ENCODE measurements at regions of chr12 and their contacts with region 1.

Region 1: DNA sequence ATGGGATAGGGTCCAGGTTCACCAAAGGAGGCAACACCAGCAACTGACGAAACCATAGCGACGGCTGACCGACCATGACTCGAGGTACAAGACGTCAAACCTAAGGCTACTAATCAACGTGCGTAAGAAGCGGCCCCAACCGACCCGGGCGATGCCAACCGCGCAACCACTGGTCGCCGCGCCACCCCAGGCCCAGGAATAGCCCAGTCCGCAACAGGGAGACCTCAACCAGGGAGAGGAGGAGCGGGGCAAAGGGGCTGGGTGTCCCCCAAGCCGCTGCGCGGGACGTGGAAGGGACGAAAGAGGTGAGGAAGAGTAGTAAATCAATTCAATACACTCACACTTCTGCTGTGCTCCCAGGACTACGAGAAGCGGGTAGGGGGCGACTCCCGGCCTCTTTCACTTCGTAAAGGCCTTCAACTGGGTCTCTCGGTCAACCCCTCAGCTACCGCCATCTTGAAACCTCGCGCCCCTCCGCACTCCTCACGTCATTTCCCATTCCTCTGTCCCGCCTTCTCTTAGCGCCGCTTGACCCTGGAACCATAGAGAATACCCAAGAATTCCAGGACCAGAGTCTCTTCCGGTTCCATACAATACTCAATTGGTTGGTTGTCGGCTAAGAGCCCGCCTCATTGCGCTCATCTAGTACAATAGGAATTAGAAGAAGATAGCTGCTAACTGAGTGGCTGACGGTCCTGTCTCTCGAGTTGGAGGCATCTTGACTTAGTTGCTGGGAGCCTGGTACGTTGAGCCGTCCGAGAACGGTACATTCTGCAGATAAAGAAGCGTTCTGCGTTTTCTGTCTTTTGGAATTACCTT is at the starts of genes C12orf60 and WBP11:
- DNase-seq: peak; percentile 94
- H3K4me3 Mint-ChIP-seq: no peak within 1 kb of the TSS
- H3K27ac Mint-ChIP-seq: no peak within 1 kb of the TSS
- H3K4me1 Mint-ChIP-seq: peaks cover 34% of the 10 kb centered on the region
- H3K27me3 Mint-ChIP-seq: no peaks in the 10 kb centered on the region
- total RNA-seq, gene C12orf60: 2.0 to 3.1 TPM
- total RNA-seq, gene WBP11: 105 to 115 TPM

Region 2: DNA sequence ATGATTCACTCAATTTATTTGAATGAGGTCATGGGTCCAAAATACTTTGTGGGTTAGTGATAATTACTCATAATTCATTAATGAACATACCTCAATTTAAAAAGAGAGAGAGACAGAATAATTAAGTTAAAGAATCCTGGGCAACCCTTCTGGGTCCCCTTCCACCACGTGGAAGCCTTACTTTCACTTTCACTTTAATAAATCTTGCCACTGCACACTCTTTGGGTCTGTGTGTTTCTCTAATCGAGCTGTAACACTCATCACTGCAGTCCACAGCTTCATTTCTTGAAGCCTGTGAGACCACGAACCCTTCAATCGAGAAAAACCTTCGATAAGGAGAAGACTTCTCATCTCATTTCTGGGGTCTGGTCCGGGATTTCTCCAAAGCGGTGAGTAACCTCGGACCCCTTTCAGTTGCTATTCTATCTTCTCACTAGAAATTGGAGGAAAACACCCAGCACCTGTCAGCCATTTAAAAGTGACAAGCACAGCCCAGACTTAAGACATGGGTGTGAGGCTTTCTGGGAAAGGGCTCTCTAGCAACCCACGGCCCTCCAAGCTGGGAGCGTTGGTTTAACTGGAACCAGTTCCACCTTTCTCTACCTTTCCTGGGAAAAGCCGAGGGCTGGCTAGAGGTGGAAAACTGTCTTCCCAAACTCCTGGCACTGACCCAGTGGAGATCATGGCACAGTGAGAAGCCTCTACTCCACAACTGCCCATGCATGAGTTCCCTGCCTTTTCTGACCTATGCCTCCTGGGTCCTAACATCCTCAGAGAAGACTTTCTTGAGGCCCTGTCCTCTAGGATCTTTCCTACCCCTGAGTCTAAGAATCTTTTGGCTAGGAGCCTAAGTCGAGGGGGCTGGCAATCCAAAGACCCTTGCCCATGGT is 586.6 kb before region 1 on chr12:
- CTCF ChIA-PET with region 1: no interaction called
- intact Hi-C with region 1: loop called (anchors 1 kb)
- DNase-seq: no peak
- H3K4me3 Mint-ChIP-seq: no peak overlapping the region
- H3K27ac Mint-ChIP-seq: peak overlapping the region; percentile 70
- H3K4me1 Mint-ChIP-seq: peaks cover 24% of the 10 kb centered on the region
- H3K27me3 Mint-ChIP-seq: no peaks in the 10 kb centered on the region

Region 3: DNA sequence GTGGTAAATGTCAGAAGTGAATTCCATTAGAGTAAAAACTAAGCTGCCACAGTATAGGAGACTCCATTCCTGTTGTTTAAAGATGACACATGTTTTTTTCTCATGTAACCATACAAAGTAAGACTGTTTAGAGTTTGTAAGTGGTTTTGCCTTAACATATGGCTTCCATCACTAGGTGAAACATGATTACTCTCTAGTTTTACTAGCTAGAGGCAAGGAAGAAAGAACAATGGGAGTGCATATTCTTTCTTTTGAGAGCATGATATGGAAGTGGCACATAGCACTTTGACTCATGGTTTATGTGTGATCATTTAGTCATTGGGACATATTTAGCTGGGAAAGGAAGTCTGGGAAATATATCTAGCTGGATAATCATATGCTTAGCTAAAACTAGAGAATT is 430.0 kb before region 1 on chr12:
- CTCF ChIA-PET with region 1: no interaction called
- intact Hi-C with region 1: no loop called
- DNase-seq: no peak
- H3K4me3 Mint-ChIP-seq: peak overlapping the region; percentile 41
- H3K27ac Mint-ChIP-seq: peak overlapping the region; percentile 89
- H3K4me1 Mint-ChIP-seq: peaks cover 59% of the 10 kb centered on the region
- H3K27me3 Mint-ChIP-seq: no peaks in the 10 kb centered on the region

Region 4: GRCh38 chr12:14443531-14443930 is 359.7 kb before region 1 on chr12:
- CTCF ChIA-PET with region 1: no interaction called
- intact Hi-C with region 1: no loop called
- DNase-seq: no peak
- H3K4me3 Mint-ChIP-seq: no peak overlapping the region
- H3K27ac Mint-ChIP-seq: no peak overlapping the region
- H3K4me1 Mint-ChIP-seq: peaks cover 20% of the 10 kb centered on the region
- H3K27me3 Mint-ChIP-seq: no peaks in the 10 kb centered on the region

Region 5: DNA sequence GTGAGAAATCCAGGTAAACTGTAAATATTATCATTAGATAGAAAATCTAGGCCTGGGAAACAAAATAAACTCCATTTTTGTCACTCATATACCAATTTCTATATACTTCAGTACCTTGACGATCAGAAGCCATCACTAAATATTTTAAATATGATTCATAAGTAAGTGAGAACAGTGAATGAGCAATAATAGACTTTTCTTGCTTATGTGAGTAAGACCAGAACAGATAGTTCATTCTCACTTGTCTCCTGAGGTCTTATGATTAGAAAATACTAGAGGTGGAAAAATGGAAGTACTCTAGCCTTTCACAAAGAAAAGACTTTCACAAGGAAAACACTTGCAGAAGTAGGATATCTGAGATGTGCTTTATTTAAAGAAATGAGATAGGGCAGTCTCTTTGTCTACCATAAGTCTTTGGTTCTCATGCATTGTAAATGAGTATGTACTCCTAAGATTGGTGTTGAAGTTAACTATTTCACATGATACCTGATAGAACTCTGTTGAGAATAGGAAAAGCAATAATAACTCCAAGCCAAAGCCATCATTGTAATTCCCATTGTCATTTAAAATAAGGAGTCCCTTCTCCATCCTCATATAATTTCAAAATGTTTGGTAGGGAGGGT is 20.9 kb after region 1 on chr12:
- CTCF ChIA-PET with region 1: no interaction called
- intact Hi-C with region 1: loop called (anchors 1 kb)
- DNase-seq: no peak
- H3K4me3 Mint-ChIP-seq: no peak overlapping the region
- H3K27ac Mint-ChIP-seq: no peak overlapping the region
- H3K4me1 Mint-ChIP-seq: peaks cover 22% of the 10 kb centered on the region
- H3K27me3 Mint-ChIP-seq: peaks cover 1% of the 10 kb centered on the region

Measured in activated naive CD4-positive, alpha-beta T cell treated with anti-CD3 and anti-CD28 coated beads for 36 hours (primary cell).